HCT116 (cell line): ENCODE measurements at regions of chr5 and their contacts with region 1.

Region 1: GRCh38 chr5:148826053-148826738 is at the start of gene ADRB2:
- DNase-seq: peak; percentile 74
- ATAC-seq: peak; percentile 97
- H3K4me3 ChIP-seq: peak within 1 kb of the TSS; percentile 58 to 60
- H3K27ac ChIP-seq: no peak within 1 kb of the TSS; the same call in 1 of the 2 replicates
- H3K4me1 ChIP-seq: peaks cover 5 to 14% of the 10 kb centered on the region in 2 experiments; a peak in 2 of 4 replicates
- H3K27me3 ChIP-seq: no peaks in the 10 kb centered on the region
- CTCF ChIP-seq: no peak; a peak in 1 of 6 replicates
- POLR2A ChIP-seq: no peak
- RAD21 ChIP-seq: no peak
- total RNA-seq, gene ADRB2: 0.25 TPM

Region 2: DNA sequence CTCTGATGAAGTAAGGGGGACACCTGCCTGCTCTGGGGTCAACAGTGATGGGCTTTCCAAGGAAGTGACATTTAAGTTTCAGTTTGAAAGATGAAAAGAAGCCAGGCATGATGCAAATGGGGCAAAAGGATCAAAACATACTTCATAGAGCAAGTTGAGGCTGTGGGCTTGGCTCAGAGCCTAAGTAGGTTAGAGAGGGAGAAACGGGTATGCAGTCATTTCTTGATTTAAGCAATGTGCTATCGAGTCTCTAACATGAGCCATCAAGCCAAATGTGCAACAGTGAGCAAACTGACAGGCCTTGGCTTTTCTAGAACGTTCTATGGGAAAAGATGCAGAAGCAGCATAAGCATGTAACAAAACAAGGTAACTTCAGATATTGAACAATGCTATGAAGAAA is 80.8 kb after region 1 on chr5:
- CTCF ChIA-PET with region 1: no interaction called
- POLR2A ChIA-PET with region 1: no interaction called
- RAD21 ChIA-PET with region 1: no interaction called
- intact Hi-C with region 1: loop called (anchors 1 kb)
- DNase-seq: no peak
- ATAC-seq: no peak
- H3K4me3 ChIP-seq: no peak overlapping the region
- H3K27ac ChIP-seq: no peak overlapping the region
- H3K4me1 ChIP-seq: peaks cover 9 to 29% of the 10 kb centered on the region in 2 experiments
- H3K27me3 ChIP-seq: no peaks in the 10 kb centered on the region
- CTCF ChIP-seq: no peak
- POLR2A ChIP-seq: no peak
- RAD21 ChIP-seq: no peak